ENCODE measurements at regions of chr3 and their contacts with region 1.

Region 1: DNA sequence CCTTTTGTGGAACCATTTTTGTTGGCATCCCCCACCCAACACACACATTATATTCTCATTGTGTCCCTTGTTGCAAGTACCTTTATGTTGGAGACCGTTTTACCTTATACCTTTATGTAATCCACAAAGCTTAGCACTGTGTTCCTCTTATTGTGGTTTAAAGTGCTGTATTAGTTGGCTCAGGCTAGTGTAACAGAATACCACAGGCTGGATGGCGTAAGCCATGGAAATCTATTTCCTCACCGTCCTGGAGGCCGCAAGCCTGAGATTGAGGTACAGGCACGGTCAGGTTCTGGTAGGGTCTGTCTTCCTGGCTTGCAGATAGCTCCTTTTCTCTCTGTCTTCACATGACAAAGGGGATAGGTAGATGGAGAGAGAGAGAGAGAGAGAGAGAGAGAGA is 302.8 kb downstream of the ROBO2 start:
- DNase-seq: no peak
- ATAC-seq: no peak

Region 2: GRCh38 chr3:77296527-77296926 is 46.2 kb before region 1 on chr3:
- intact Hi-C with region 1: no loop called
- DNase-seq: no peak
- ATAC-seq: no peak

Region 3: GRCh38 chr3:77707281-77707680 is 364.6 kb after region 1 on chr3:
- intact Hi-C with region 1: no loop called
- DNase-seq: no peak
- ATAC-seq: no peak

Region 4: GRCh38 chr3:77967621-77968020 is 624.9 kb after region 1 on chr3:
- intact Hi-C with region 1: loop called (anchors 5 kb)
- DNase-seq: no peak
- ATAC-seq: no peak

Measured in sciatic nerve (tissue), 2 donors.